ENCODE measurements at regions of chr6 and their contacts with region 1.

Region 1: DNA sequence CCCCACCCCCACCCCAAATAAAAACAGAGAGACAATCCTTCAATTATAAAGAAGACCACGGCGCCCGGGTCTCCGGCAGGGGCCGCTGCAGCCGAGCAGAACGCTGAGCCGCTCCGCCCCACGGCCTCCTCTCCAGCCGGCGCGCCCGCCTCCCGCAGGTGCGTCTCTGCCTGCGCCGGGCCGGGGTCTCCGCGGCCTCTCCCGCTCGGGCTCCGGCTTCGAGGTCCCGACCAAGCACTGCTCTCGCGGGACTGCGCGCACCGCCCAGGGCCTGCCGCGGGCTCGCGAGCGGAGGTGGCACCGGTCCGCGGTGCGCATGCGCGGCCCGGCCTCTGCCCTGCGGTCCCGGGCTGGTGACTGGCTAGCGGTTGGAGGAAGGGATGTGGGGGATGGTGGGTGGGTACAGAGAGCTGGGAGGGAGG is 241 bp upstream of the SIRT5 start:
- DNase-seq: peak; percentile 90
- H3K4me3 Mint-ChIP-seq: peak overlapping the region; percentile 98
- H3K27ac Mint-ChIP-seq: peak overlapping the region; percentile 99
- H3K4me1 Mint-ChIP-seq: peaks cover 9% of the 10 kb centered on the region
- H3K27me3 Mint-ChIP-seq: peaks cover 4% of the 10 kb centered on the region

Region 2: DNA sequence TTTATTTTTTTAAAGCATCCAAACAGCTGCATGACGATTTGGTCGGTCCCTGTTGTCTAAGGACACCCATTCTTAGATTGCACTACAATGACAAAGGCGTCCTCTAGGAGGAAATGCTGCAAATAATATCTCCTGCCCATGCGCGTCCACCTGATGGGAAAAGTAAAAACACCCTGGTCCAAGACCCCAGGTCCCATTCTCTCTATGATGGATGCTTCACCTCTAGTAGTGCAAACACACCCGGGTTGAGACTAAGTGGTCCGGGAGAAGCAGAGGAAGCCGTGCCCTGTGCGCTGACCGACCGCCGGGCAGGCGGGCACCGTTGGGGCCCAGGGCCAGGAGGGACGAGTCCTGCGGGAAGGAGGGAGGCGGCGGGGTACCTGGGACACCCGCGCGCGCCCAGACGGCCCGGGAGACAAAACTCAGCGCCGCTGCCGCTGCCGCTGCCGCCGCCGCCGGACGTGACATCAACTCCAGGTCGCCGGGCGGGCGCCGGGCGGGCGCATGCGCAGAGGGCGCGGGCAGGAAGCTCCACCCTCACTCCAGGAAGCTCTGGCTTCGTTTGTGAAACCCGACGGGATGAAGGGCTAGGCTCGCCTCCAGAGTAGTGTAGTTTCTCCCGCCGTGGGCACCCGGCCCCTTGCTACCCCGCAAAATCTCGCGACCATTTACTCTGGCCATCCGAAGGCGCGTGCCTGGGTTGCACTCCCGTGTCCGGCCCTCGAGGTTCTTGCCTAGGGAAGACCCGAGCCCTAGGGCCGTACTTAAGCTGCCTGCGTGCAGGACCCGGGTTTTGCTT is 245.9 kb before region 1 on chr6 and contains the start of gene TBC1D7:
- intact Hi-C with region 1: loop called (anchors 2 kb)
- DNase-seq: peak; percentile 93
- H3K4me3 Mint-ChIP-seq: peak within 1 kb of the TSS; percentile 89
- H3K27ac Mint-ChIP-seq: peak within 1 kb of the TSS; percentile 89
- H3K4me1 Mint-ChIP-seq: peaks cover 26% of the 10 kb centered on the region
- H3K27me3 Mint-ChIP-seq: no peaks in the 10 kb centered on the region
- total RNA-seq, gene TBC1D7: 22.9 and 23.3 TPM in 2 replicates

Region 3: GRCh38 chr6:13427801-13428582 is 146.2 kb before region 1 on chr6:
- intact Hi-C with region 1: loop called (anchors 2 kb)
- DNase-seq: peak; percentile 64
- H3K4me3 Mint-ChIP-seq: peak overlapping the region; percentile 27
- H3K27ac Mint-ChIP-seq: peak overlapping the region; percentile 84
- H3K4me1 Mint-ChIP-seq: peaks cover 71% of the 10 kb centered on the region
- H3K27me3 Mint-ChIP-seq: no peaks in the 10 kb centered on the region

Region 4: DNA sequence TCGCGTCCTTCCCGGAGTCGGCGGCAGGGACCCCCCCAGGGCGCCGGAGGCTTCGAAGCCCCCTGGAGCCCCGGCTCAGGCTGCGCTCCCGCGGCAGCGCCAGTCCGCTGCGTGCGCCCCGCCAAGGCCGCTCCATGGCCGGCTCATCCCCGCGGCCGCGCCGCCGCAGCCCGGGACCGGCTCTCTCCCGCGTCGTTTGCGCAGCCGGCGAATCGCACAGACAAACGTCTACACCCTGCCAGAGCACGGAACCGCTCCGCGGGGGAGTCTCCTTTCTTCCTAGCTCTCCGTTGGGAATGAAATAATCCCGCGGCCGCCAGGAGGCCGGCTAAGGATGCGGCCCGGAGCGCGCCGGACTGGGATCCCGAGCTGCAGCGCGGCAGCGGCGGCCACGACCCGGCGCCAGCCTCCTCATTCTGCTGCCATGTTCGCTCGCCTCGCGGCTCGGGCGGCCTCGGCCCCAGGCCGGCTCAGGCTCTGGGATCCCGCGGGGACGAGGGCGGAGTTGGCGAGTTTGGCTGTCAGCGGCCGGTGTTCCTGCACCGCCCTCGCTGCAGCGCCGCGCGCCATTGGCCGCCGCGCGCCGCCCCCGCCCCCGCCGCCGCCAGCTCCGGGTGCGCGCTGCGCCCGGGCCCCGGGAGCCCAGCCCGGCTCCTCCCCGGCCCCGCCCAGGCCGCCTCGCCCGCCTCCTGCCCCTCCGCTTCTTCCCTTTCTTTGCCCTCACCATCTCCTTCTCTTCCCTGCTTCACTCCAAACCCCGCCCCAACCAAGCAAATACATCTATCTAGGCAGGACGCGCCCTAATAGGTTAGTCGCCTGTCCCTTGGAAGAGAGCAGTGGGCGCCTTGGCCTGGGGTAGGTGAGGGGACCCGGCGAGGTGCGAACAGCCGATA is 86.8 kb before region 1 on chr6 and contains the start of gene GFOD1:
- intact Hi-C with region 1: loop called (anchors 2 kb)
- DNase-seq: peak; percentile 78
- H3K4me3 Mint-ChIP-seq: peak within 1 kb of the TSS; percentile 85
- H3K27ac Mint-ChIP-seq: peak within 1 kb of the TSS; percentile 70
- H3K4me1 Mint-ChIP-seq: peaks cover 42% of the 10 kb centered on the region
- H3K27me3 Mint-ChIP-seq: peaks cover 12% of the 10 kb centered on the region
- total RNA-seq, gene GFOD1: 4.6 and 4.8 TPM in 2 replicates

Region 5: DNA sequence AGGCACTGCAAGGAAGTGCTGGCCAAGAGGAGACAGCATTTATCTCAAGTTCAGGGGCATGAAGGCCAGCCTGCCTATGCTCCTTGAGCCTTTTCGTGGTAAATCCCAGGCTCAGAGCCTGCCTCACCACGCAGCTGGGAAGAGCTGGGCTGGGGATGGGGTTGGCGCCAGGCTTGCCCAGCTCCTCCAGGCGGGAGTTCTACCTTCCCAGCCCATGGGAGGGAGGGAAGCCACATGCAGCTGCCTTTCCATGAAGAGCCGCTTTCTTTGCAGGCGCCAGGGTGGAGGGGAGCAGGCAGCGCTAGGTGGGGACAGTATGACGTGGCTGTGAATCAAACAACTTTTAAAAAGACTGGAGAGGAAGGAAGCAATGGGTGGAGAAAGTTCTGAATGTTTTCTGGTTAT is 19.2 kb before region 1 on chr6:
- intact Hi-C with region 1: no loop called
- DNase-seq: no peak
- H3K4me3 Mint-ChIP-seq: no peak overlapping the region
- H3K27ac Mint-ChIP-seq: no peak overlapping the region
- H3K4me1 Mint-ChIP-seq: no peaks in the 10 kb centered on the region
- H3K27me3 Mint-ChIP-seq: peaks cover 37% of the 10 kb centered on the region

Region 6: GRCh38 chr6:13795041-13795750 is 221.0 kb after region 1 on chr6:
- intact Hi-C with region 1: loop called (anchors 2 kb)
- DNase-seq: peak; percentile 76
- H3K4me3 Mint-ChIP-seq: no peak overlapping the region
- H3K27ac Mint-ChIP-seq: peak overlapping the region; percentile 77
- H3K4me1 Mint-ChIP-seq: peaks cover 24% of the 10 kb centered on the region
- H3K27me3 Mint-ChIP-seq: no peaks in the 10 kb centered on the region

Region 7: GRCh38 chr6:14066782-14067406 is 492.7 kb after region 1 on chr6:
- intact Hi-C with region 1: loop called (anchors 10 kb)
- DNase-seq: no peak
- H3K4me3 Mint-ChIP-seq: peak overlapping the region; percentile 32
- H3K27ac Mint-ChIP-seq: peak overlapping the region; percentile 74
- H3K4me1 Mint-ChIP-seq: peaks cover 41% of the 10 kb centered on the region
- H3K27me3 Mint-ChIP-seq: peaks cover 17% of the 10 kb centered on the region